CD14-positive monocyte (primary cell): ENCODE measurements at regions of chr2 and their contacts with region 1.

Region 1: DNA sequence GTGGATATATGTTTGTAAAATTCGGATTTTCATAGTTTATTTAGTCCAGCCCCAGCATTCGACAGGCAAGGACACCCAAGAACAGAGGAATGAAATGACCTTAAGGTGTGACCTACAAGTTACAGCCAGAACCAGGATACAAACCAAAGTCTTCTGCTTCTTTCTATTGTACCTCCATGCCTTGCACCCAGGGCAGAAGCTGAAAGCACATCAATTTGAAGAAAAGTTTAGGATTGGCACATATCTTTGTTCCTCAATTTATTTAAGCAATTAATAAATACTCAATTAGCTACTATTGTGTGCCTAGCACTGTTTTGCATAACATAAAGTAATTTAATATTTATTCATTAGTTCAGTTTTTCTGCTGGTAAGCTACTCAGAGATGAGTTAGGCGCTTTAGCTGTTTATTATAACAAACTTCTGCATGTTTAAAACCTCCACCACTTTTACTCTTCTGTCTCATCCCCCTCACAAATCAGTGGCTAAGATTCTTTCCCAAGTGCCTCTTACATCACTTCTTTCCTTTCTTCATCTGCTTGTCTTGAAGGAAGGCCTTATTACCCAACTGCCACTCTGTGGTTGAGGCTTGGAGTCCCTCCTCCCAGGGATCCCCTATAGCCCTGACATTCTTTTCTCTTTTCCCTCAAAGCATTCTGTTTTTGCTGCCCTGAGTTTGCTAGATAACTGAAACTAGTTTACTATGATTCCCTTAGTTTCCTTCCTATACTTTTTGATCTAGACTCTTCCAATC is 37.1 kb upstream of the DARS1 start:
- DNase-seq: peak; percentile 83 to 92 (median 91)
- H3K4me3 ChIP-seq: peak overlapping the region in 1 of 3 experiments; percentile 19
- H3K4me3 Mint-ChIP-seq: peak overlapping the region in 1 of 2 donors; percentile 17
- H3K27ac ChIP-seq: peak overlapping the region; percentile 46 to 82
- H3K27ac Mint-ChIP-seq: peak overlapping the region; percentile 82 to 93 (median 92)
- H3K4me1 ChIP-seq: peaks cover 83 to 85% of the 10 kb centered on the region in 2 donors
- H3K4me1 Mint-ChIP-seq: peaks cover 76% of the 10 kb centered on the region
- H3K27me3 ChIP-seq: no peaks in the 10 kb centered on the region
- H3K27me3 Mint-ChIP-seq: peaks cover 0 to 1% (median 0%) of the 10 kb centered on the region in 3 donors
- CTCF ChIP-seq: no peak

Region 2: GRCh38 chr2:135411653-135412052 is 610.9 kb before region 1 on chr2:
- intact Hi-C with region 1: no loop called
- DNase-seq: no peak
- H3K4me3 ChIP-seq: no peak overlapping the region
- H3K4me3 Mint-ChIP-seq: no peak overlapping the region
- H3K27ac ChIP-seq: no peak overlapping the region
- H3K27ac Mint-ChIP-seq: no peak overlapping the region
- H3K4me1 ChIP-seq: no peaks in the 10 kb centered on the region
- H3K4me1 Mint-ChIP-seq: no peaks in the 10 kb centered on the region
- H3K27me3 ChIP-seq: no peaks in the 10 kb centered on the region
- H3K27me3 Mint-ChIP-seq: no peaks in the 10 kb centered on the region
- CTCF ChIP-seq: no peak

Region 3: DNA sequence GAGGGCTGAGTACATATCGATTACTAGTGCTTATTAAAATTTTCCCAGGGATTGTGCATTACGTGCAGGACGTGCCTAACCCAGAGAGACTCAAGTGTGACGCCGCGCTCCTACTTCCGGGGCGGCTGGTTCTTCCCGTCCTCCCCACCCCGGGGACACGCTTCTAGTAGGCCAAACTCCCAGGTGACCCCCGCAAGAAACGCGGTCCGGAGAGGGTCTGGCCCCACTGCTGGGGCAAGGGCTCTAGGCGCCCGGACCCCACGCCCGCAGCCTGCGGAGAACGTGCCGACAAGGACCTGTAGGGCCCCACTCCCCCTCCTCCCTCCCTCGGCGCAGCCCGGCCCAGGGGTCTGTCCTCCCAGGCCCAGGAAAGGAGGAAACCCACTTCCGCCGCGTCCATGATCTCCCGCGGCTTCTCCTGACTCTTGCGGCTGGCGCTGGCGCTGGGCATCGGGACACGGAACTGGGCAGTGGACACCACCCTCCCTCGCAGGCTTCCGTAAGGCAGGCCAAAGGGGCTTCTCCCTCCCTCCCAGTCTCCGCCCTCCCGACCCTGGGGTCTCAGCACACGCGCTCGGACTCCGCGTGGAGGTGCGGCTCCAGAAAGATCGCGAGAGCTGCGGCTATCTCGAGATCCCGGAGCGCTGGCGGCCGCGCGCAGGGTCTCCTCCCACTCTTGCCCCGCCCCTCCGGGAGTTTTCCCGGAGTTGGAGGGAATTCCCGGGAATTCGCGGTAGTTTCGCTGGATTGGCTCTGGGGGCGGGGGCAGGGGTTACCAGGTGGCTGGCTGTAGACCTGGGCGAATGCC is 37.3 kb before region 1 on chr2 and contains the start of gene DARS1:
- intact Hi-C with region 1: loop called in 1 of 2 experiments (anchors 5 kb)
- DNase-seq: peak; percentile 71 to 88 (median 74)
- H3K4me3 ChIP-seq: peak within 1 kb of the TSS; percentile 46 to 96 (median 94)
- H3K4me3 Mint-ChIP-seq: peak within 1 kb of the TSS; percentile 90 to 95
- H3K27ac ChIP-seq: peak within 1 kb of the TSS; percentile 98 to 99
- H3K27ac Mint-ChIP-seq: peak within 1 kb of the TSS; percentile 92 to 97 (median 95)
- H3K4me1 ChIP-seq: peaks cover 22 to 39% of the 10 kb centered on the region in 2 donors
- H3K4me1 Mint-ChIP-seq: peaks cover 33% of the 10 kb centered on the region
- H3K27me3 ChIP-seq: no peaks in the 10 kb centered on the region
- H3K27me3 Mint-ChIP-seq: no peaks in the 10 kb centered on the region
- CTCF ChIP-seq: no peak
- polyA plus RNA-seq, gene DARS1: 24.4 to 53.0 (median 46.2) TPM

Region 4: GRCh38 chr2:136065384-136065783 is 42.8 kb after region 1 on chr2:
- intact Hi-C with region 1: no loop called
- DNase-seq: peak in 1 of 3 donors; percentile 12
- H3K4me3 ChIP-seq: no peak overlapping the region
- H3K4me3 Mint-ChIP-seq: no peak overlapping the region
- H3K27ac ChIP-seq: no peak overlapping the region
- H3K27ac Mint-ChIP-seq: peak overlapping the region in 1 of 7 donors; percentile 21
- H3K4me1 ChIP-seq: peaks cover 0 to 14% of the 10 kb centered on the region in 2 donors
- H3K4me1 Mint-ChIP-seq: peaks cover 14% of the 10 kb centered on the region
- H3K27me3 ChIP-seq: no peaks in the 10 kb centered on the region
- H3K27me3 Mint-ChIP-seq: peaks cover 0 to 2% (median 1%) of the 10 kb centered on the region in 3 donors
- CTCF ChIP-seq: no peak

Region 5: DNA sequence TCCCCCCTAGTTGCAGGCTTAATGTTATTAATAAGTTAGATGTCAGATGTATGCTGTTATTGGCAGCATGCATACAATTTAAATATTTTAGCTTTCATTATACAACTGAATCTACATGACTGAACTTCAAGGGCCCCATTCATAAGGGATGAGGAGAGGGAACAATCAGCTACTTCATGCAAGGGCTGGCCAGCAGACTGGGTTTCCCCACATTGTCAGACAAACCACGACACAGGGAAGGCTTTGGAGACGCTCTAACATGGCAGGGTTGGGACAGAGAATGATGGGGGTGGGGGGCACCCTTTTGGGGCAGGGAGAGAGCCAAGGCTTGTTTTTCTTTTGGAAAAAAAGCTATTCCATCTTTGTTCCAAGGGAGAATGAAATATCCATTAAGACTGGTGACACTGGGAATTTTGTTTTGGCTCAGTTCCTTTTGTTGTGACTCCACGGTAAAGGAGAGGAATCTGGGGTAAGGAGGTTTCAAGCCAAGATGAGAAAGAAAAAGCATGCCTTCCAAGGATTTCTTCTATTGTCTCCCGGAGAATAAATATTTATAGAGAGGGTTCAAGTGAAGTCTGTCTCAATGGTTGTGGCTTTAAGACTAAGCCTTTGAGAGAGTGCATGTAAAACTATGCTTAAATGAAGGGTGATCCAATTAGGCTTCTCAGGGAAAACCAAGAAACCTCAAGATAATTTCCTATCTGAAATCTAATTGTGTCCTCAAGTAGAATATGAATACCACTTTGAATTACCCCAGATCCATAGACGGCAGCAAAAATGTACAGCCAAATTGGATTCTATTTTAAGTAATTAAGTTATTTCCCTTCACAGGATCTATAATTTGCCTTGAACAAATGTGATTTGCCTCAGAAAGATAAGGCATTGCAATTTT is 90.0 kb after region 1 on chr2:
- intact Hi-C with region 1: loop called (anchors 5 kb)
- DNase-seq: peak in 2 of 3 donors; percentile 25 to 62
- H3K4me3 ChIP-seq: peak overlapping the region in 1 of 3 experiments; percentile 98
- H3K4me3 Mint-ChIP-seq: peak overlapping the region in 1 of 2 donors; percentile 92
- H3K27ac ChIP-seq: peak overlapping the region; percentile 72 to 95
- H3K27ac Mint-ChIP-seq: peak overlapping the region; percentile 94 to 97 (median 95)
- H3K4me1 ChIP-seq: peaks cover 61 to 63% of the 10 kb centered on the region in 2 donors
- H3K4me1 Mint-ChIP-seq: peaks cover 63% of the 10 kb centered on the region
- H3K27me3 ChIP-seq: no peaks in the 10 kb centered on the region
- H3K27me3 Mint-ChIP-seq: peaks cover 0 to 3% (median 0%) of the 10 kb centered on the region in 3 donors
- CTCF ChIP-seq: no peak